OCI-LY7 (cell line): ENCODE measurements at regions of chr5 and their contacts with region 1.

Region 1: GRCh38 chr5:66089384-66089783 is 54.7 kb upstream of the SREK1 start:
- DNase-seq: no peak
- H3K4me3 ChIP-seq: no peak overlapping the region
- H3K27ac ChIP-seq: no peak overlapping the region
- H3K4me1 ChIP-seq: no peaks in the 10 kb centered on the region
- CTCF ChIP-seq: no peak

Region 2: GRCh38 chr5:66074901-66075300 is 14.5 kb before region 1 on chr5:
- CTCF ChIA-PET with region 1: no interaction called
- POLR2A ChIA-PET with region 1: interaction called, 11 read pairs
- intact Hi-C with region 1: no loop called
- DNase-seq: no peak
- H3K4me3 ChIP-seq: no peak overlapping the region
- H3K27ac ChIP-seq: no peak overlapping the region
- H3K4me1 ChIP-seq: no peaks in the 10 kb centered on the region
- CTCF ChIP-seq: no peak

Region 3: DNA sequence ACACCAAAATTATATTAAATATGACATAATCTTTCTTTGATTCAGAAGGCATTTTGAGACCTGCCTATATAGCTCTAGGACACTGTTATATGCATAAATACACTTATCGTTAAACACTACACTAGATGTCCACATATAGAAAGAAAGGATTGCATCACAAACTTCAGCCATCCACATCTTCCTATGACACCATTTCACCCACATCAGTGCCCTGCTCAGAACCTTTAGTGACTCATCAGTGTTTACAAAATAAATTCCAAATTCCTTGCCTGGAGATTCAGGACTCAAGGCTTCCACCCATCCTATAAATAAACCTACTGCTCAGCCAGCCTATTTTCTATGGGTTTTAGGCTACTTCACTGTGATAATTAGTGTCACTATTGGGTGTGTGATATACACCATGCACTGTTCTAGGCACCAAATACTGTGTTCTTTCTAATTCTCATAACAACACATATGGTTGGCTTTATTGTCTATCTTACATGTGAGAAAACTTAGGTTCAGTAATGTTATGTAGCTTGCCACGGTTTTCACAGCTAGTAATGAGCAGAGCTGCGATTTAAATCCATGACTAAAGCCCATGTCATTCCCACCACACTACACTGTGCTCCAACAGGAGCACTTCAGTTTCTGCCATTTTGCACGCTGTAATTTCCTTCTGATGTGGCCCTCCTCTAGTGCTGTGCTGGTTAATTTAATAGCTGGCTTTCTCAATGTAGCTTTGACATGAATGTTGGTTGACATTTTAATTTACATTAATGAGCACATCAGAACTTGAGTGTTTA is 158.0 kb after region 1 on chr5:
- CTCF ChIA-PET with region 1: no interaction called
- POLR2A ChIA-PET with region 1: no interaction called
- intact Hi-C with region 1: no loop called
- DNase-seq: no peak
- H3K4me3 ChIP-seq: no peak overlapping the region
- H3K27ac ChIP-seq: no peak overlapping the region
- H3K4me1 ChIP-seq: no peaks in the 10 kb centered on the region
- CTCF ChIP-seq: no peak